CD8-positive, alpha-beta T cell (primary cell): ENCODE measurements at regions of chr9 and their contacts with region 1.

Region 1: DNA sequence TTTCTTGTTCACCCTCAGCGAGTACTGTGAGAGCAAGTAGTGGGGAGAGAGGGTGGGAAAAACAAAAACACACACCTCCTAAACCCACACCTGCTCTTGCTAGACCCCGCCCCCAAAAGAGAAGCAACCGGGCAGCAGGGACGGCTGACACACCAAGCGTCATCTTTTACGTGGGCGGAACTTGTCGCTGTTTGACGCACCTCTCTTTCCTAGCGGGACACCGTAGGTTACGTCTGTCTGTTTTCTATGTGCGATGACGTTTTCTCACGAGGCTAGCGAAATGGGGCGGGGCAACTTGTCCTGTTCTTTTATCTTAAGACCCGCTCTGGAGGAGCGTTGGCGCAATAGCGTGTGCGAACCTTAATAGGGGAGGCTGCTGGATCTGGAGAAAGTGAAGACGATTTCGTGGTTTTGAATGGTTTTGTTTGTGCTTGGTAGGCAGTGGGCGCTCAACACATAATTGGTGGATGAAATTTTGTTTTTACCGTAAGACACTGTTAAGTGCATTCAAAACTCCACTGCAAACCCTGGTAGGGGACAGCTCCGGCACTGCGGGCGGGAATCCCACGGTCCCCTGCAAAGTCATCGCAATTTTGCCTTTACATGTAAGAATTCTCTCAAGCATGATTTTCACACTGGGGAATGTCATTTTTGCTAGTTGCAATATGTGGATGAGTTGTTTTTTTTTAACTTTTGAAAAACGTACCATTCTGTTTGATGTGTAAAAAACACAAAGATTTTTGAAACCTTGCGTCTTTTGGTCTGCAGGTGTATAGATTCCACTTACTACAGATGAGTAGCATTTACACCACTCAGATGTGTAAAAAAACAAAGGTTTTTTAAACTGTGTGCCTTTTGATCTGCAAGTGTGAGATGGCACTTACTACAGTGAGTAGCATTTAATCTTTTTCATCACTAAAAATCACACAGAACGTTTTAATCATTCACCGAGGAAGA is 631 bp upstream of the C9orf72 start:
- DNase-seq: peak; percentile 91 to 100 (median 94)
- ATAC-seq: peak; percentile 82
- H3K4me3 ChIP-seq: peak overlapping the region; percentile 57 to 88
- H3K4me3 Mint-ChIP-seq: peak overlapping the region; percentile 96
- H3K27ac ChIP-seq: peak overlapping the region; percentile 90 to 98
- H3K27ac Mint-ChIP-seq: peak overlapping the region; percentile 99
- H3K4me1 ChIP-seq: peaks cover 16% of the 10 kb centered on the region
- H3K4me1 Mint-ChIP-seq: peaks cover 28% of the 10 kb centered on the region
- H3K27me3 ChIP-seq: no peaks in the 10 kb centered on the region
- H3K27me3 Mint-ChIP-seq: no peaks in the 10 kb centered on the region
- CTCF ChIP-seq: no peak

Region 2: DNA sequence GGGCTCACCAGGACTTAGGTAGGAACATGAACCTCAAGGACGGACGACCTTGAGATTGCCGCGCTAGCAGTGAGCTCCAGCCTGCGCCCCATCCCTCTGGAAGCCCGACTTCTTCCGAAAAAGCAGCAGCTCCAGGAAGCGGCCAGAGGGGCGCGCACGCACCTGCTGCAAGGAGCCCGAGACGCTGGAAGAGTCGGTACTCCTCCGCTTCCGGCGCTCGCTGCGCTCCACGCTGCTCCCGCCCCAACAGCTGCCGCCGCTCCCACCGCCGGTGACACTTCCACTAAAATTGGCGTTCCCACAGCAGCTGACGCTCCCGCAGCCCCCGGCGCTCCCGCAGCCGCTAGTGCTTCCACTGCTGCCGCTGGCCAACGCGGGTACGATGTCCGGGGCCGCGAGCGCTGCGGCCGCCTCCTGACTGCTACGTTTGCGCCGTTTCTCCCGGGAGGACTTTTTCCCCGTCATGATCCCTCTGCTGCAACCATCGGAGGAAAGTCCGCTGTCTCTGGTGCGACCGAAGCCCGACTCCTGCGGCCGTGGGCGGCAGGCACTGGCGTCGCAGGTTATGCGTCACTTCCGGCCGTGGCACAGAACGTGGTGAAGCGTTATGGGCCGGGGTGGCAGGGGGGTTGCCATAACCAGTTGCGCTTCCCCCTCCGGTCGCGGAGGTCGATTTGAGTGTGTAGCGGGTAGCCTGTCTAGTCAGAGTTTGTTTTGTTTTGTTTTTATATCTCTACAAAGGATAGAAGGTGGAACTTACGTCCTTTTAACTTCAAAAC is 681.5 kb before region 1 on chr9 and contains the start of gene CAAP1:
- CTCF ChIA-PET with region 1: no interaction called
- POLR2A ChIA-PET with region 1: no interaction called
- intact Hi-C with region 1: loop called (anchors 1 to 5 kb)
- DNase-seq: peak; percentile 80 to 96 (median 93)
- ATAC-seq: peak; percentile 93
- H3K4me3 ChIP-seq: peak within 1 kb of the TSS; percentile 96
- H3K4me3 Mint-ChIP-seq: peak within 1 kb of the TSS; percentile 98
- H3K27ac ChIP-seq: peak within 1 kb of the TSS; percentile 98 to 99
- H3K27ac Mint-ChIP-seq: peak within 1 kb of the TSS; percentile 99
- H3K4me1 ChIP-seq: peaks cover 19% of the 10 kb centered on the region
- H3K4me1 Mint-ChIP-seq: peaks cover 42% of the 10 kb centered on the region
- H3K27me3 ChIP-seq: no peaks in the 10 kb centered on the region
- H3K27me3 Mint-ChIP-seq: no peaks in the 10 kb centered on the region
- CTCF ChIP-seq: peak; percentile 40
- total RNA-seq, gene CAAP1: 13.4 to 15.1 TPM

Region 3: GRCh38 chr9:26939955-26940711 is 633.8 kb before region 1 on chr9:
- CTCF ChIA-PET with region 1: no interaction called
- POLR2A ChIA-PET with region 1: no interaction called
- intact Hi-C with region 1: loop called in 1 of 2 experiments (anchors 5 kb)
- DNase-seq: no peak
- ATAC-seq: no peak
- H3K4me3 ChIP-seq: no peak overlapping the region
- H3K4me3 Mint-ChIP-seq: peak overlapping the region; percentile 1
- H3K27ac ChIP-seq: peak overlapping the region in 1 of 2 experiments; percentile 14
- H3K27ac Mint-ChIP-seq: peak overlapping the region; percentile 2
- H3K4me1 ChIP-seq: peaks cover 38% of the 10 kb centered on the region
- H3K4me1 Mint-ChIP-seq: peaks cover 74% of the 10 kb centered on the region
- H3K27me3 ChIP-seq: no peaks in the 10 kb centered on the region
- H3K27me3 Mint-ChIP-seq: no peaks in the 10 kb centered on the region
- CTCF ChIP-seq: no peak

Region 4: DNA sequence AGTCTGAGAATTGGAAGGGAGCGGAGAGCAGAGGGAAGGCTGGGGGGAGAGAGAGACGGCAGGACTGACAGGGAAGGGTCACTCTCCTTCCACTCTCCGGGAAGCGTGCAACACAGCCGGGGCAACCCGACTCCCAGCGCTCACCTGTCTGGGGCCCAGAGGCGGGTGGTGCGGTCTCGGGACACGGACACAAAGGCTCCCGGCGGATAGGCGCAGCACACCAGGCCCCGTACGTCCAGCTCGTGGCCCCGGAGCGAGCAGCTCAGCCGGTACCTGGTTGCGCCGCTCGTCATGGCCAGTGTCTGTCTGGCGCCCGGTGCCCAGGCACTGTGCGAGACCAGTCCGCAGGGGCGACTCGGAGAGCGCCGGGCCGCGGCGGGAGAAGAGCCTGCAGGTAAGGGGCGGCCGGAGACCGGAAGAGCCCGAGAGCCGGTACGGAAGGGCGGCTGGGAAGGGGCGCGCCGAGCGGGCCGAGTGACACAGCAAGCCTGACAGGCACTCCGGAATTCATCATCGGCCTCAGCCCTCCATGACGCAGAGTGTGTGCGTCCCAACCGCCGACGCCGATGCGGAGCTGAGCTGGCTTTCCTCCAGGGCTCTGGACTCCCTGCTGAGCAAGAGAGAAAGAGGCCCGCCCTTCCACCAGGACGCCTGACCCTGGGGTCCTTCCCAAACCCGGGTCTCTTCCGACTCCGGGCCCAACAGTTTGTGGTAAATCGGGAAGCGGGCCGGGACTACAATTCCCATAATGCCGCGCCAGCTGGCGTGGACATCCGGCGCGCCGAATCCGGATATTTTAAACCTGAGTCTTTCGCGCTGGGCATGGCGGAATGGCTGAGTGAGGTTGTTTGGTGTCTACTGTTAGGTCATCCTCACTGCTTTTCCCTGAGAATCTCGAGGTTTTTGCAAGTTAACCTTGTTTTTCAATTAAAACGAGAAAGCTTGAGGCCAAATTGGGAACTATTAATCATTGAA is 626.9 kb before region 1 on chr9 and contains the start of gene PLAA:
- CTCF ChIA-PET with region 1: no interaction called
- POLR2A ChIA-PET with region 1: no interaction called
- intact Hi-C with region 1: loop called (anchors 1 to 5 kb)
- DNase-seq: peak; percentile 62 to 92 (median 86)
- ATAC-seq: peak; percentile 94
- H3K4me3 ChIP-seq: peak within 1 kb of the TSS; percentile 88 to 98
- H3K4me3 Mint-ChIP-seq: peak within 1 kb of the TSS; percentile 95
- H3K27ac ChIP-seq: peak within 1 kb of the TSS; percentile 97 to 100
- H3K27ac Mint-ChIP-seq: peak within 1 kb of the TSS; percentile 99
- H3K4me1 ChIP-seq: peaks cover 35% of the 10 kb centered on the region
- H3K4me1 Mint-ChIP-seq: peaks cover 46% of the 10 kb centered on the region
- H3K27me3 ChIP-seq: no peaks in the 10 kb centered on the region
- H3K27me3 Mint-ChIP-seq: peaks cover 7% of the 10 kb centered on the region
- CTCF ChIP-seq: no peak
- total RNA-seq, gene PLAA: 38.5 to 40.6 TPM

Region 5: DNA sequence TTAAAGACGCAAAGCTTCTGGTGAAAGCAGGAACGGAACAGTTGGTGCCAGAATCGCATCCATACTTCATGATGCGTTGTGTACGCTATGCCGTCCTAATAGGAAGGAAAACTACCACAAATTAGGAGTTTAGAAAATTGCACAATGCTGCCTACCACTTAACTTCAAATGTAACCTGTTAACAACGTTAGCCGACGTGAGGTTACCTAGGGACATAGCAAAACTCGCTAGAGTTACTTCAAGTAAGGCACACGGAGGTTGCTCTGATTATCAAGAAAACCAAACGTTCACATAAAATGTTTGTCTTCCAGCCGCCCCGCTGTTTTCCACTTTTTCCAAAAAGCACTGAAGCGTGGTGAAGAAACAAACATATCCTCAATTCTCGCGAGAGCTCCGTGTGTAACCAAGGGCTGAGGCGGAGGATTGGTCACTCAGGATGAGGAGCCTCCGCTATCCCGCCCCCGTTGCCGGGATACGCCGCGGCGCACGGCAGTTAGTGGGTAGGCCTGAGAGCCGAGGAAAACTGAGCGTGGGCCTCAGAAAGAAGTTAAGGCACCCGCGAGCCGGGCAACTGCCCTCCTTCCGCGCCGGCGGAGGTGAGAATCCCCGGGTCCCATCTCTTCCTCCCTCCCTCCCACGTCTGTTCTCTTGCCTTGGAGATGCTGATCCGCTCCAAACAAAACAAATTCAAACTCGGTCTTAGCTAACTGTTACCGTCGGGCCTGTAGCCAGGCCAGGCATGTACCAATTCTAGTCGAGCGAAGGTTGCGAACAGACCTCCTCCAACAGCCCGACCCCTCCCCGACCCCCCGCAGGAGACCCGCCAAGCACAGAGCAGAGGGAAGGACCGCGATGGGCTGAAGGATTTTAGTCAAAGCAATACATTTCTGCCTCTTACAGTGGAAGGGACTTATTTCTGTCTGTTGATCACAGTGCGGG is 617.7 kb before region 1 on chr9 and contains the start of gene IFT74:
- CTCF ChIA-PET with region 1: no interaction called
- POLR2A ChIA-PET with region 1: no interaction called
- intact Hi-C with region 1: loop called in 1 of 2 experiments (anchors 1 kb)
- DNase-seq: peak; percentile 84 to 98 (median 94)
- ATAC-seq: peak; percentile 99
- H3K4me3 ChIP-seq: peak within 1 kb of the TSS; percentile 73
- H3K4me3 Mint-ChIP-seq: peak within 1 kb of the TSS; percentile 89
- H3K27ac ChIP-seq: peak within 1 kb of the TSS; percentile 80 to 82
- H3K27ac Mint-ChIP-seq: peak within 1 kb of the TSS; percentile 92
- H3K4me1 ChIP-seq: peaks cover 13% of the 10 kb centered on the region
- H3K4me1 Mint-ChIP-seq: peaks cover 35% of the 10 kb centered on the region
- H3K27me3 ChIP-seq: no peaks in the 10 kb centered on the region
- H3K27me3 Mint-ChIP-seq: no peaks in the 10 kb centered on the region
- CTCF ChIP-seq: no peak
- total RNA-seq, gene IFT74: 5.8 to 6.3 TPM

Region 6: GRCh38 chr9:27529316-27530278 is 44.3 kb before region 1 on chr9 and contains the start of gene MOB3B:
- CTCF ChIA-PET with region 1: no interaction called
- POLR2A ChIA-PET with region 1: no interaction called
- intact Hi-C with region 1: loop called in 1 of 2 experiments (anchors 1 kb)
- DNase-seq: peak; percentile 49 to 86 (median 77)
- ATAC-seq: peak; percentile 95
- H3K4me3 ChIP-seq: peak within 1 kb of the TSS; percentile 44 to 67
- H3K4me3 Mint-ChIP-seq: peak within 1 kb of the TSS; percentile 92
- H3K27ac ChIP-seq: no peak within 1 kb of the TSS
- H3K27ac Mint-ChIP-seq: no peak within 1 kb of the TSS
- H3K4me1 ChIP-seq: no peaks in the 10 kb centered on the region
- H3K4me1 Mint-ChIP-seq: peaks cover 12% of the 10 kb centered on the region
- H3K27me3 ChIP-seq: peaks cover 0 to 3% of the 10 kb centered on the region in 2 experiments
- H3K27me3 Mint-ChIP-seq: no peaks in the 10 kb centered on the region
- CTCF ChIP-seq: peak; percentile 95
- total RNA-seq, gene MOB3B: 0.11 to 0.17 TPM

Region 7: DNA sequence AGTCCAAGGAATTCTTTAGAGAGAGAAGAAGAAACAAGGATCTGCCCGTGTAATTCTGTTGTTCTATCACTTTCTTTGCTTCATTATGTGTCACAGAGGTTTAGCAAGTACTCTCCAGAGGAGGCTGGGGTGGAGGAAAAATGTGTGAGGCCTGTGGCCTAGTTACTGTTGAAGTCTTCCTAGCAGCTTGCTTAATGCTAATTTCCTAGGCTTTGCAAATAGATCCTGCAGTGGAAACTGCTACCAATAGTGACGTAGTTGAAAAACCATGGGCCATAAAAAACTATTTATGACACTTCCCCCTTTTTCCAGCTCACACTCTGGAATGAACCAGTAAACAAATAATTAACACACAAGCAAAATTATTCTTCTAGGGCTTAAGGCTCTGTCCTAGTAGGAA is 26.3 kb after region 1 on chr9:
- CTCF ChIA-PET with region 1: no interaction called
- POLR2A ChIA-PET with region 1: no interaction called
- intact Hi-C with region 1: no loop called
- DNase-seq: no peak
- ATAC-seq: no peak
- H3K4me3 ChIP-seq: no peak overlapping the region
- H3K4me3 Mint-ChIP-seq: no peak overlapping the region
- H3K27ac ChIP-seq: no peak overlapping the region
- H3K27ac Mint-ChIP-seq: no peak overlapping the region
- H3K4me1 ChIP-seq: no peaks in the 10 kb centered on the region
- H3K4me1 Mint-ChIP-seq: no peaks in the 10 kb centered on the region
- H3K27me3 ChIP-seq: no peaks in the 10 kb centered on the region
- H3K27me3 Mint-ChIP-seq: peaks cover 2% of the 10 kb centered on the region
- CTCF ChIP-seq: no peak

Region 8: DNA sequence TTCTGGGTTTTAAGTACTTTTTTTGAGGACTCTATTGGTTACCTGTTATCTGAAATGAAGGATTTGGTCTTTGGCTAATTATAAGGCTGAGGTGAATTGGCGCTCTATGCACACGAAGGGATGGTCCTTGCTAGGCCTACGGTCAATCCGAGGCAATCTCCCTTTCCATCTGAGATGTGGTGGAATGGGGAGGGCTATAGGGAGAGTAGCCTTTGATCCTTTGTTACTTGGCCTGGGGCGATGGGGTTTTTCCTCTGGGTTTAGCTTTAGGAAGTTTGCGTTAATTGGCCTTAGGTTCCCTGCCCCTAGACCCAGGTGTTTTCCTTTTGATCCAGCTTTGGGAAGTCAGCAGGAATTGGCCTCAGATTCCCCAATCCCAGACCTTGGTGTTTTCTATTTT is 101.4 kb after region 1 on chr9:
- CTCF ChIA-PET with region 1: no interaction called
- POLR2A ChIA-PET with region 1: no interaction called
- intact Hi-C with region 1: no loop called
- DNase-seq: no peak
- ATAC-seq: no peak
- H3K4me3 ChIP-seq: no peak overlapping the region
- H3K4me3 Mint-ChIP-seq: no peak overlapping the region
- H3K27ac ChIP-seq: no peak overlapping the region
- H3K27ac Mint-ChIP-seq: no peak overlapping the region
- H3K4me1 ChIP-seq: no peaks in the 10 kb centered on the region
- H3K4me1 Mint-ChIP-seq: no peaks in the 10 kb centered on the region
- H3K27me3 ChIP-seq: peaks cover 0 to 4% of the 10 kb centered on the region in 2 experiments
- H3K27me3 Mint-ChIP-seq: no peaks in the 10 kb centered on the region
- CTCF ChIP-seq: no peak